SK-N-SH (cell line): ENCODE measurements at regions of chr11 and their contacts with region 1.

Region 1: DNA sequence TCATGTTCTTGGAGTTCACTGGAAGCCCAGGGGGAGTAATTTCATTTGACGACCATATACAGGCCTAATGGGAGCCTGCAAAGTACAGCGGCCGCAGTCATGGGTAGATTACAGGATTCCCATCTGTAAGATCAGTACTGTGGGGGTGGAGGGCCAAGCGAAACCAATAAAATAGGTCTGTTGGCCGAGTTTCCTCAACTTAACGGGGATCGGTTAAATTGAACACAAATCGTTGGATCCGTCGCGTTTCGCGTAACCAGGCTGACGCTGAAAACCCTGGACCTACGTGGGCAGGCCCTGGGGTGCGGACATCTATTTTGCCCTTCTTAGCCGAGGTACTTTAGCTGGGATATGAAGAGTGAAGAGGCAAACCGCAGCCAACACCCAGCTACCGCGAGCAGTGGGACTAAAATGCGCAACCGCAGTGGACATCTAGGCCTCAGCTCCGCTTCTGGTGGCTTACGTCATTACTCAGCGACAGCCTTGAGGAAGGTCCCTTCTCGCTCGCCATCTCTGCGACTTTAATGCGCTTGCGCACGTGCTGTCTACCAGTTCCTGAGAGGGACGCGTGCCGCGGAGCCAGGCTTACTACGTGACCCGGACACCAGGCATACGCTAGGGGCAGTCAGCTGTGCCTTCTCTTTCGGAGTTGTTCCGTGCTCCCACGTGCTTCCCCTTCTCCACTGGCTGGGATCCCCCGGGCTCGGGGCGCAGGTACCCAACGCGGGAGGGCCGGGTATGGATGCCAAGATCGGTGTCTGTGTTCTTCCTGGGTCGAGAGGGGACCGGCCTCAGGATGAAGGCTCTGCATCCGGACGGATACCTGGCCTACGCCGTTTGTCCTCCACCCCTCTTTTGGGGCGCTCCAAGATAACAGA is at the start of gene NAT10:
- DNase-seq: peak; percentile 85
- H3K4me3 ChIP-seq: peak within 1 kb of the TSS; percentile 89 to 97
- H3K27ac ChIP-seq: peak within 1 kb of the TSS; percentile 89 to 98
- H3K4me1 ChIP-seq: peaks cover 13 to 19% of the 10 kb centered on the region in 2 experiments; a peak in 3 of 4 replicates
- H3K27me3 ChIP-seq: no peaks in the 10 kb centered on the region
- CTCF ChIP-seq: no peak; the same call in 1 of the 2 replicates
- EP300 ChIP-seq: no peak
- RAD21 ChIP-seq: no peak
- polyA plus RNA-seq, gene NAT10: 31.0 and 38.4 TPM in 2 replicates

Region 2: GRCh38 chr11:33682446-33682845 is 422.9 kb before region 1 on chr11:
- CTCF ChIA-PET with region 1: no interaction called
- POLR2A ChIA-PET with region 1: no interaction called
- DNase-seq: no peak
- H3K4me3 ChIP-seq: no peak overlapping the region
- H3K27ac ChIP-seq: no peak overlapping the region
- H3K4me1 ChIP-seq: no peaks in the 10 kb centered on the region
- H3K27me3 ChIP-seq: no peaks in the 10 kb centered on the region
- CTCF ChIP-seq: no peak
- EP300 ChIP-seq: no peak
- RAD21 ChIP-seq: peak; percentile 36

Region 3: DNA sequence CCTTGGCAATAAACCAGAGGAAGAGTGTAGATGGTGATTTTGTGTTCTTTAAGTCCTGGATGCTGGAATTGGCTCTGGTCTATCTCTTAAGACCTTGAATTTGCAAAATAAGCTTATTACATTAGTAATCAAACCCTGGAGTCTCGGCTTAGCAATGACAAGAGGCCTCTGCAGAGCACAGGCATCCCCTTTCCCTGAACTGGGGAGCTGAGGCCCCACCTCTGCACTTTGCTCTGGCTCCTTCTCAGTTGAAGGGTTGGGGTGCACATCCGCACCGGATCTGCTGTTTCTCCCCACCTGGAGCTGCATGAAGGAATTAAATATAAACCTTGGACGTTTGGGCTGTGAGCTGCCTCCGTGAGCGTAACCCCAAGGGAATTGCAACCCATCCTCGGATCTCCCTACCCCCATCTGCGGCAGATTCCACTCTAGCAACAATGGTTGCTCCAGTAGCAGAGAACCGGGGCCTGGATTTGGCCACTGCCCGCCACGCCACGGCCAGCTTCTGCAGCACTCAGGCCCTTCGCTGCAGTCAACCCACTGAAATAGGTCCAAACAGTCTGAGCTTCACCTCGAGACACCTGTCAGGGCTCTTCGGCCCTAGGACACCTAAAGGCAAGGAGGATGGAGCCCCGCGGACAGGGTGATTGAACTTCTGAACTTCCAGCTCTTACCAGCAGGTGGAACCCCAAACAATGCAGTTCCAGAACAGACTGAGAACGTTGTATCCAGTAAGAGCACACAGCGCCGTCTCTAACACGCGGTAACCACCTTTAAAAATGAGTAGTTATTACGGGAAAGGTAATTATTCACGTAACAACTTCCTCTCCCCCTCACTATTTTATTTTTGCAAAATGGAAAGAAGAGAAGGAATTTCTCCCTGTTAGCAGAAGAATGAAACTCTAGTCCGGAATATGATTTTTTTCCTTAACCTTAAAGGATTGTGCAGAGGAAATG is 108.5 kb before region 1 on chr11:
- CTCF ChIA-PET with region 1: interaction called, 13 read pairs
- POLR2A ChIA-PET with region 1: no interaction called
- DNase-seq: peak; percentile 80
- H3K4me3 ChIP-seq: no peak overlapping the region
- H3K27ac ChIP-seq: no peak overlapping the region
- H3K4me1 ChIP-seq: peaks cover 6 to 30% of the 10 kb centered on the region in 2 experiments; a peak in 2 of 4 replicates
- H3K27me3 ChIP-seq: peaks cover 14% of the 10 kb centered on the region; the same call in 1 of the 2 replicates
- CTCF ChIP-seq: peak; percentile 79
- EP300 ChIP-seq: no peak
- RAD21 ChIP-seq: peak; percentile 84

Region 4: DNA sequence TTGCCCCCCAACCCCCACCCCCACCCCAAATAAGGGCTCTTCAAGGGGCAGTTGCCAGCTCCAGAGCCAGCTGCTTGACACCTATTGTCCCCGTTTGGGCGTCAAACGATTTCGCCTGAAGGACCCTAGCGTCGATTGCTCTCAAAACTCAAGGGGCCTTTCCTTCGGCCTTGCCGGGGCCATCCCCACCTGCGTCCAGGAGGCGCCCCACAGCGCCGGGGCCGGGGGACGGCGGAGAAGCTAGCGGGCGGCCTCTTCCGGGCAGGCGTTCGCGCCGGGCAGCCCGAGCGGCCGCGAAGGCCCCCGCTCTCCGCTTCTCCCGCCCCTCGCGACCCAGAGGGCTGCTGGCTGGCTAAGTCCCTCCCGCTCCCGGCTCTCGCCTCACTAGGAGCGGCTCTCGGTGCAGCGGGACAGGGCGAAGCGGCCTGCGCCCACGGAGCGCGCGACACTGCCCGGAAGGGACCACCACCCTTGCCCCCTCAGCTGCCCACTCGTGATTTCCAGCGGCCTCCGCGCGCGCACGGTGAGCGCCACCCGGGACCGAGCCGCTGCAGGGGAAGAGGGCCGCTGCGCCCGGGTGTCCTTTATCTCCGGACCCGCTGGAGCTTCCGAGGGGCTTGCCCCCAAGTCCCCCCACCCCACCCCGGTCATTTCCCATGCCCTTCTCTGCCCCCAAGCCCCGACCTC is 53.8 kb before region 1 on chr11 and contains the start of gene CAPRIN1:
- CTCF ChIA-PET with region 1: interaction called, 3 read pairs
- POLR2A ChIA-PET with region 1: interaction called, 16 read pairs
- DNase-seq: peak; percentile 95
- H3K4me3 ChIP-seq: peak within 1 kb of the TSS; percentile 95
- H3K27ac ChIP-seq: peak within 1 kb of the TSS; percentile 97
- H3K4me1 ChIP-seq: peaks cover 13 to 70% of the 10 kb centered on the region in 2 experiments
- H3K27me3 ChIP-seq: no peaks in the 10 kb centered on the region
- CTCF ChIP-seq: no peak
- EP300 ChIP-seq: peak in 1 of 2 experiments; percentile 3; a peak in 1 of 4 replicates
- RAD21 ChIP-seq: no peak
- polyA plus RNA-seq, gene CAPRIN1: 67.1 and 93.4 TPM in 2 replicates